Esophagus muscularis mucosa (tissue), 4 donors: ENCODE measurements at regions of chr10 and their contacts with region 1.

Region 1: DNA sequence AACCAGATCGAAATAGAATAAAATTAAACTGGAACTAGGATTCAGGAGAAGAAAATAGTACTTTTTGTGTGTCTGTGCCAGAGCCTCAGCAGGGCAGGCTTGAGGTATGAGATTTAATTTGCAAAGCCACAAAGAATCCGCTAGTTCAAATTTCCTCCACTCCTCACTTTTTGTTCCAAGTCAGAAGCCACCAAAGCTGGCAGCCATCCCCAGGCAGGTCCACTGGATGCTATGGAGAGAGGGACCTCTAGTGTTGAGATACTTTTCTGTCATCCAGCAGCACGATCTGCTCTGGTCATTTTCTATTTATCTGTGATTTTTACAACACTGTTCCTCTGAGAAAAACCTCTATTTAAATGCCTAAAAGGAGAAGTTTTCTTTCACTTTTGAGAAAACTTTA is 147.9 kb upstream of the FRMD4A start:
- DNase-seq: no peak
- H3K4me3 ChIP-seq: no peak overlapping the region
- H3K27ac ChIP-seq: no peak overlapping the region
- H3K4me1 ChIP-seq: peaks cover 0 to 19% (median 16%) of the 10 kb centered on the region in 4 donors
- H3K27me3 ChIP-seq: no peaks in the 10 kb centered on the region
- CTCF ChIP-seq: peak; percentile 56 to 72 (median 68)
- EP300 ChIP-seq: no peak
- POLR2A ChIP-seq: no peak

Region 2: GRCh38 chr10:14191871-14192270 is 286.7 kb before region 1 on chr10:
- intact Hi-C with region 1: loop called (anchors 5 kb)
- DNase-seq: no peak
- H3K4me3 ChIP-seq: no peak overlapping the region
- H3K27ac ChIP-seq: no peak overlapping the region
- H3K4me1 ChIP-seq: no peaks in the 10 kb centered on the region
- H3K27me3 ChIP-seq: no peaks in the 10 kb centered on the region
- CTCF ChIP-seq: no peak
- EP300 ChIP-seq: no peak
- POLR2A ChIP-seq: no peak

Region 3: GRCh38 chr10:14635043-14635710 is 156.6 kb after region 1 on chr10:
- intact Hi-C with region 1: no loop called
- DNase-seq: no peak
- H3K4me3 ChIP-seq: no peak overlapping the region
- H3K27ac ChIP-seq: no peak overlapping the region
- H3K4me1 ChIP-seq: no peaks in the 10 kb centered on the region
- H3K27me3 ChIP-seq: no peaks in the 10 kb centered on the region
- CTCF ChIP-seq: no peak
- EP300 ChIP-seq: no peak
- POLR2A ChIP-seq: no peak